T-cell (primary cell): ENCODE measurements at regions of chr3 and their contacts with region 1.

Region 1: GRCh38 chr3:196111939-196112386 is 30.1 kb upstream of the TFRC start:
- DNase-seq: peak in 12 of 35 experiments; percentile 6 to 72 (median 16)
- ATAC-seq: peak in 2 of 4 experiments; percentile 63 to 92
- H3K4me3 ChIP-seq: no peak overlapping the region
- H3K4me3 Mint-ChIP-seq: peak overlapping the region in 2 of 3 donors; percentile 36 to 39
- H3K27ac ChIP-seq: no peak overlapping the region
- H3K27ac Mint-ChIP-seq: peak overlapping the region in 1 of 2 donors; percentile 76
- H3K4me1 ChIP-seq: peaks cover 5 to 13% of the 10 kb centered on the region in 2 experiments
- H3K4me1 Mint-ChIP-seq: peaks cover 14 to 17% (median 15%) of the 10 kb centered on the region in 3 donors
- H3K27me3 ChIP-seq: no peaks in the 10 kb centered on the region
- H3K27me3 Mint-ChIP-seq: no peaks in the 10 kb centered on the region

Region 2: GRCh38 chr3:196097373-196098154 is 14.4 kb before region 1 on chr3:
- CTCF ChIA-PET with region 1: interaction called, 3 to 13 read pairs
- POLR2A ChIA-PET with region 1: no interaction called
- DNase-seq: no peak
- ATAC-seq: peak in 1 of 4 experiments; percentile 34
- H3K4me3 ChIP-seq: no peak overlapping the region
- H3K4me3 Mint-ChIP-seq: no peak overlapping the region
- H3K27ac ChIP-seq: no peak overlapping the region
- H3K27ac Mint-ChIP-seq: peak overlapping the region; percentile 55 to 80
- H3K4me1 ChIP-seq: peaks cover 0 to 13% of the 10 kb centered on the region in 2 experiments
- H3K4me1 Mint-ChIP-seq: peaks cover 2 to 16% (median 16%) of the 10 kb centered on the region in 3 donors
- H3K27me3 ChIP-seq: no peaks in the 10 kb centered on the region
- H3K27me3 Mint-ChIP-seq: no peaks in the 10 kb centered on the region